Panc1 (cell line): ENCODE measurements at regions of chr1 and their contacts with region 1.

Region 1: GRCh38 chr1:52022133-52022532 is 11.5 kb downstream of the KTI12 start:
- DNase-seq: no peak
- ATAC-seq: no peak
- H3K4me3 ChIP-seq: no peak overlapping the region
- H3K27ac ChIP-seq: no peak overlapping the region
- H3K4me1 ChIP-seq: no peaks in the 10 kb centered on the region
- H3K27me3 ChIP-seq: no peaks in the 10 kb centered on the region
- CTCF ChIP-seq: no peak

Region 2: DNA sequence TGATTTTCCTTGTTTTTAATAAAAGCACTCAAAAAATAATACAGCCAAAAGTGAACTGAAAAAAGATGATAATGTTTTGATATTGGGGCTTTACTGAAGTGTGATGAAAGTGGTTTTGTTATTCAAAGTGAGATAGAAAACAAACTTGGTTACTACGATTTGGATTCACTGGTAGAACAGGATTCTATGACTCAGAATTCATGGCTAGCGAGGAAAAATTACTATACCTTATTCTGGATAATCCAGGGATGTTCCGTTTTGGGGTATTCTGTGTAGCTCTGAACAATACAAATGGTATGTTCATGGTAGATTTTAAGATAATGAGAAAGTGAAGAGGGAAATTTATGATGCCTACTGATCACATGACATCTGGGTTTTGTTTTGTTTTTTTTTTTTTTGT is 261.3 kb before region 1 on chr1:
- CTCF ChIA-PET with region 1: no interaction called
- POLR2A ChIA-PET with region 1: interaction called, 10 read pairs
- in situ Hi-C with region 1: no loop called
- intact Hi-C with region 1: no loop called
- DNase-seq: no peak
- ATAC-seq: no peak
- H3K4me3 ChIP-seq: no peak overlapping the region
- H3K27ac ChIP-seq: no peak overlapping the region
- H3K4me1 ChIP-seq: no peaks in the 10 kb centered on the region
- H3K27me3 ChIP-seq: no peaks in the 10 kb centered on the region
- CTCF ChIP-seq: no peak

Region 3: DNA sequence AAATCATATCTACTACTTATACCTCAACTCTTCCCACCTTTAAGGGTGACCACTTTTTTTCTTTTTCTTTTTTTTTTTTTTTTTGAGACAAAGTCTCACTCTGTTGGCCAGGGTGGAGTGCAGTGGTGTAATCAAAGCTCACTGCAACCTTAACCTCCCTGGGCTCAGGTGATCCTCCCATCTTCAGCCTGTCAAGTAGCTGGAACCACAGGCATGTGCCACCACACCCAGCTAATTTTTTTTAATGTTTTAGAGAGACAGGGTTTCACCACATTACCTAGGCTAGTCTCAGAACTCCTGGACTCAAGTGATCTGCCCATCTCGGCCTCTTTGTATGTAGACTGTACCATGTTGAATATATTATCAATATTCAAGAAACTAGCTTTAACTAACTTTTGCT is 183.0 kb before region 1 on chr1:
- CTCF ChIA-PET with region 1: no interaction called
- POLR2A ChIA-PET with region 1: interaction called, 25 read pairs
- in situ Hi-C with region 1: no loop called
- intact Hi-C with region 1: no loop called
- DNase-seq: no peak
- ATAC-seq: no peak
- H3K4me3 ChIP-seq: no peak overlapping the region
- H3K27ac ChIP-seq: no peak overlapping the region
- H3K4me1 ChIP-seq: no peaks in the 10 kb centered on the region
- H3K27me3 ChIP-seq: no peaks in the 10 kb centered on the region
- CTCF ChIP-seq: no peak